ENCODE measurements at regions of chr1 and their contacts with region 1.

Region 1: DNA sequence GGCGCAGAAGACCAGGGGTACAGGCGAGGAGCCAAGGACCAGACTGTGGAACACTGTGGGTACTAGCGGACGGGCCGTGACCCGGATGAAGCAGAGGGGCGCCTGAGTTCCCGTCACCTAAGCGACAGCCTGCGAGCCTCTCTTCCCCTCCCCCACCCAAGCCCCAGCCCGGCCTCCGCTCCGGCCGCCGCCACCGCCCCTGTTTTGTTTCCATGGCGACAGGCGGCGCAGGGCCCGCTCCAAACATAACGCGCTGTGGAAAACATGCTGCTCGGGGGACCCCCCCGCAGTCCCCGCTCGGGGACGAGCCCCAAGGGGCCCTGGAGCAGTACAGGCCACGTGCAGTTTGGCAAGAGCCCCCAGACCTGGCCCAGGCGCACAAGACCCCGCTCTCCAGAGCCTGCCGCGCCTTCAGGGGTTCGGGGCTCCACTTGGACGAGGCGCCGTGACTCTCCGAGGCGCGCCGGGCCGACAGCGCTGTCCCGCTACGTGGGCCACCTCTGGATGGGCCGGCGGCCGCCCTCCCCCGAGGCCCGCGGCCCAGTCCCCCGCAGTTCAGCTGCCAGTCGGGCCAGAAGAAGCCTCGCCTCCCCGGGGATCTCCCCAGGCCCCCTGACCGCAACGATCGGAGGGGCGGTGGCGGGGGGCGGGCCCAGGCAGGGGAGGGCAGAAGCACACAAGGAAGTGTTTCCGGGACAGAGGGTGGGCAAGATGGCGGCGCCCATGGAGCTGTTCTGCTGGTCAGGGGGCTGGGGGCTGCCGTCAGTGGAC is at the start of gene MTX1:
- DNase-seq: peak; percentile 87 to 96 (median 92)
- H3K4me3 ChIP-seq: peak within 1 kb of the TSS; percentile 100
- H3K4me3 Mint-ChIP-seq: peak within 1 kb of the TSS; percentile 82 to 93 (median 89)
- H3K27ac ChIP-seq: peak within 1 kb of the TSS; percentile 99
- H3K27ac Mint-ChIP-seq: peak within 1 kb of the TSS; percentile 92 to 99 (median 96)
- H3K4me1 ChIP-seq: peaks cover 23% of the 10 kb centered on the region
- H3K4me1 Mint-ChIP-seq: peaks cover 18 to 28% (median 26%) of the 10 kb centered on the region in 3 donors
- H3K27me3 ChIP-seq: no peaks in the 10 kb centered on the region
- H3K27me3 Mint-ChIP-seq: peaks cover 0 to 3% of the 10 kb centered on the region in 2 donors
- total RNA-seq, gene MTX1: 67.6 to 73.2 TPM

Region 2: DNA sequence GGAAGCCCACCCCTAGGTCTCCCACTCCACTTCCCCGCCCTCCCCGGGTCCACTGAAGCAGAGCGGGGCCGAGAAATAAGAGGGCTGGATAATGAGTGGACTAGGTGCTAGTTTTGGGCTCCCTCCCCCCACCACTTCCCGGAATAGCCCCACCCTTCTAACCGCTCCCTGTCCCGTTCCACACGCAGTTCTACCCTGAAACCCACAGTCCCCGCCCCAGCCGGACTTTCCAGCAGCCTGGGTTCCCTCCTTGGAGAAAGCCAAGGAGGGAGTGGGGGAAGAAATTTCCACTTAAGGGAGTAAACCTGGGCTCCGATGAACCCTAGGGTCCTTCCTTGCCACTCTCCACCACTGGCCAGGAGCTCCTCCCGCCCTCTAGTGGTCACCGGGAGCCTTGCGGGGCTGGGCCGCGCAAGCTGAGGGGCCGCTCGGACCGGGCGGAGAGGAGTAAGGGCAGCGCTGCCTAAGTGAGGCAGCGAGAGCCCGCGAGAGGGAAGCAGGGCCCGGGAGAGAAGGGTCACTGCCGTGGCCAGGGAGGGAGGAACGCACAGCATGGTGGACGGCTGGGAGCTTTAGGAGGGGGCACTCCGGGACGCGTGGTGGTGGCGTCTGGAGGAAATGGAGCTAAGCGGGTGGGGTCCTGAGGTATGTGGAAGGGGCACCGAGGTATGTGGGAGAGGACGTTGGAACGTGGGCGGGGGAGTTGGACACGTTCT is 15.3 kb before region 1 on chr1:
- CTCF ChIA-PET with region 1: interaction called, 33 read pairs
- POLR2A ChIA-PET with region 1: interaction called, 9 read pairs
- DNase-seq: peak; percentile 55 to 78 (median 58)
- H3K4me3 ChIP-seq: peak overlapping the region; percentile 78
- H3K4me3 Mint-ChIP-seq: peak overlapping the region; percentile 83 to 95 (median 89)
- H3K27ac ChIP-seq: peak overlapping the region; percentile 89
- H3K27ac Mint-ChIP-seq: peak overlapping the region; percentile 94 to 100 (median 98)
- H3K4me1 ChIP-seq: peaks cover 24% of the 10 kb centered on the region
- H3K4me1 Mint-ChIP-seq: peaks cover 25 to 39% (median 26%) of the 10 kb centered on the region in 3 donors
- H3K27me3 ChIP-seq: no peaks in the 10 kb centered on the region
- H3K27me3 Mint-ChIP-seq: no peaks in the 10 kb centered on the region

Region 3: GRCh38 chr1:155244368-155245162 is 35.8 kb after region 1 on chr1:
- CTCF ChIA-PET with region 1: interaction called, 21 read pairs
- POLR2A ChIA-PET with region 1: interaction called, 8 read pairs
- DNase-seq: peak; percentile 89 to 99 (median 97)
- H3K4me3 ChIP-seq: peak overlapping the region; percentile 79
- H3K4me3 Mint-ChIP-seq: peak overlapping the region; percentile 82 to 95 (median 89)
- H3K27ac ChIP-seq: peak overlapping the region; percentile 75
- H3K27ac Mint-ChIP-seq: peak overlapping the region; percentile 89 to 99 (median 95)
- H3K4me1 ChIP-seq: peaks cover 38% of the 10 kb centered on the region
- H3K4me1 Mint-ChIP-seq: peaks cover 36 to 46% (median 40%) of the 10 kb centered on the region in 3 donors
- H3K27me3 ChIP-seq: no peaks in the 10 kb centered on the region
- H3K27me3 Mint-ChIP-seq: peaks cover 4 to 9% of the 10 kb centered on the region in 2 donors

Measured in CD8-positive, alpha-beta memory T cell (primary cell).